Activated T-helper 1 cell treated with anti-CD3 and anti-CD28 coated beads, Interleukin-12 subunit alpha, Interleukin-12 subunit beta, Interleukin-2, Interleukin-4 antibody, amounts not matched to agents 30 ng/mL and 10 ng/mL and 1 ng/mL, durations not matched to agents 14 hours and 24 hours and 36 hours (primary cell): ENCODE measurements at regions of chr11 and their contacts with region 1.

Region 1: DNA sequence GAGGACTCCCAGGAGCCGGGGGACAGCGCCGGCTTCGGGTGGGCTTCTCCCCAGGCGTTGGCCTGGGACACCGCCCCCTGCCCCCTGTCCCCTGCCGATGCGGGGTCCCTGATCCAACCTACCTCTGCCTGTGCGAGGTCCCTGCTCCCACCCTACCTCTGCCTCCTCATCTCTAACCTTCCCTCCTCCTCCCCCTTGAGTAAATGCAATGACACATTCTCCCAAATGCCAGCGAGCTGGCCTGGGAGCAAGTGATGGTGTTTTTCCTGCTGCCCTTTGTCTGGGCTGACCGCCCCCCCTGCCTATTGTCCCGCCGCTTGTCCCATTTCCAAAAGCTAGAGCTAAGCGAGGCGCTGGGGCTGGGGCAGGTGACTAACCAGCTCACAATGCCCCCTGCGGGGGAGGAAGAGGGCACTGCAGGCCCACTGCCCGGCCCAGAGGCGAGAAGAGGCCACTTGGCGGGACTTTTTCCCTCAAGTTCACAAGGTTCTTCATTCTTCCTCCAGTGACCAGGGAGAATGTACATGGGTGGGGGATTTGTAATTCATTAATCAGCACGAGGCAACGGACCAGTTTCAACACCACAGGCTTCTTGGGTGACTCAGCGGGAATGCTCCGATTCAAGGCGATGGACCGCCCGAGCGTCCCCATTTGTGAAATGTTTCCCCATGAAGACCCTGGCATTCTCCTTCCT is 674 bp upstream of the CLCF1 start:
- DNase-seq: peak; percentile 31
- H3K4me3 Mint-ChIP-seq: peak overlapping the region; percentile 87
- H3K27ac Mint-ChIP-seq: no peak overlapping the region
- H3K4me1 Mint-ChIP-seq: peaks cover 20% of the 10 kb centered on the region
- H3K27me3 Mint-ChIP-seq: peaks cover 58% of the 10 kb centered on the region

Region 2: DNA sequence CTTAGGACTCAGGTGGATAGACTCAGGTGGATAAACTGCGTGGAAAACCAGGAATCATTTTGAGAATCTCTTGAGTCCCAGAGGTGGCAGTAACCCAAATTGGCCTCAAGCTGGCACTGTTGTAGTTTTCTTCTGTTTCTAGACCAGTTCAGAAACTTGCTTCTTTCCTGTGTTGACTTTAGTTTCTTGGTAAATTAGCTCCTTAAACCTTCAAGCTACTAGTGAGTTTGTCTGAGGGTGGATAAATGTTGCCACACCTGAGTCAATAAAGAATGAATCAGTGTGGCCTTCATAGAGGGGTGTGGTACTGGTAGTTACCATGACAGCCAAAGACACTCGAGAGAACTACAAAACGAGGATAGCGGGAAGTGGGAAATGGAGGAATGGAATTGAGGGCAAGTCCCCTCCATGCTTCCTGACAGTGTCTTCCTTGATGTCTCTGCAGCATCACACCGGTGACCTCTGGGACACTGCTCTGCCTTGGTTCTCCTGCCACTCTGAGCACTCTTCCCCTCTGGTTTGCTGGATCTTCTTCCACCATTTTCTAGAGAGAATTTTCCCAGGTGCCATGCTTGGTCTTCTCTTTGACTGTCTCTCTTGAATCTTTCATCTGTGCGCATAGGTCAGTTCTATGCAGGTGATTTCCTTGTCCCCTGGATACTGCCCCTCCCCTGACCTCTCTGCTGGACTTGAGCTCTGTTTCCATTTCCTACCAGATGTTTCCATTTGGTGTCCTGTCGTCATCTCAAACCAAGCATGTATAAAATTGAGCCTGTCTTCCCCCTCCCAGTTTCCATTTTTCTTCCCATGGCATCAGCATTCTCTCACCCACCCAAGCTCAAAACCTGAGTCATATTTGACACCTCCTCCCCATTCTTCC is 27.9 kb before region 1 on chr11:
- intact Hi-C with region 1: loop called (anchors 1 kb)
- DNase-seq: no peak
- H3K4me3 Mint-ChIP-seq: peak overlapping the region; percentile 55
- H3K27ac Mint-ChIP-seq: peak overlapping the region; percentile 81
- H3K4me1 Mint-ChIP-seq: peaks cover 30% of the 10 kb centered on the region
- H3K27me3 Mint-ChIP-seq: no peaks in the 10 kb centered on the region